Activated CD8-positive, alpha-beta T cell treated with anti-CD3 and anti-CD28 coated beads, Interleukin-2, amount 10 ng/mL, durations not matched to agents 7 days and 5 days (primary cell): ENCODE measurements at regions of chr18 and their contacts with region 1.

Region 1: GRCh38 chr18:35355140-35355618 is 11.0 kb upstream of the ZNF24 start:
- DNase-seq: peak; percentile 71
- ATAC-seq: peak; percentile 96
- H3K4me3 Mint-ChIP-seq: no peak overlapping the region
- H3K27ac Mint-ChIP-seq: no peak overlapping the region
- H3K4me1 Mint-ChIP-seq: peaks cover 5% of the 10 kb centered on the region
- H3K27me3 Mint-ChIP-seq: peaks cover 2% of the 10 kb centered on the region

Region 2: DNA sequence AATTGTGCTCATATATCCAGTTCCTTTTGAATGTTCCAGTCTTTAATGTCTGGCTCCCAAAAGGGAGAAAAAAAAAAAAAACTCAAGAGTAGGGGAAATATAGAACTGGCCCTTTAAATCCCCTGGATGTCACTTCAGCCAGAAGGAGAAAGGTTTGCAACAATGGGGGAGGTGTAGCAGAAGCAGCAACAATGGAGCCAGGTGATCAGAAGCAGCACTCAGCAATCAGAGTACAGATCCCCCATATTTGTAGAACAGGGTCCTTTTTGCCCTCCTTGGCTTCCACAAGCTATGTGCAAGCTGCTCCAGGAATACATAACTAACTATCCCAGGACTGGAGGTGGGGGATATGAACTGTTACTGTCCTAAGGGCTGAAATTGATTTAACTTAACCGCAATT is 140.2 kb before region 1 on chr18:
- CTCF ChIA-PET with region 1: no interaction called
- POLR2A ChIA-PET with region 1: no interaction called
- DNase-seq: no peak
- ATAC-seq: no peak
- H3K4me3 Mint-ChIP-seq: no peak overlapping the region
- H3K27ac Mint-ChIP-seq: no peak overlapping the region
- H3K4me1 Mint-ChIP-seq: no peaks in the 10 kb centered on the region
- H3K27me3 Mint-ChIP-seq: no peaks in the 10 kb centered on the region

Region 3: GRCh38 chr18:35369126-35369525 is 13.9 kb after region 1 on chr18:
- CTCF ChIA-PET with region 1: interaction called, 10 read pairs
- POLR2A ChIA-PET with region 1: no interaction called
- DNase-seq: no peak
- ATAC-seq: no peak
- H3K4me3 Mint-ChIP-seq: no peak overlapping the region
- H3K27ac Mint-ChIP-seq: no peak overlapping the region
- H3K4me1 Mint-ChIP-seq: peaks cover 10% of the 10 kb centered on the region
- H3K27me3 Mint-ChIP-seq: peaks cover 2% of the 10 kb centered on the region